ENCODE measurements at regions of chr2 and their contacts with region 1.

Region 1: DNA sequence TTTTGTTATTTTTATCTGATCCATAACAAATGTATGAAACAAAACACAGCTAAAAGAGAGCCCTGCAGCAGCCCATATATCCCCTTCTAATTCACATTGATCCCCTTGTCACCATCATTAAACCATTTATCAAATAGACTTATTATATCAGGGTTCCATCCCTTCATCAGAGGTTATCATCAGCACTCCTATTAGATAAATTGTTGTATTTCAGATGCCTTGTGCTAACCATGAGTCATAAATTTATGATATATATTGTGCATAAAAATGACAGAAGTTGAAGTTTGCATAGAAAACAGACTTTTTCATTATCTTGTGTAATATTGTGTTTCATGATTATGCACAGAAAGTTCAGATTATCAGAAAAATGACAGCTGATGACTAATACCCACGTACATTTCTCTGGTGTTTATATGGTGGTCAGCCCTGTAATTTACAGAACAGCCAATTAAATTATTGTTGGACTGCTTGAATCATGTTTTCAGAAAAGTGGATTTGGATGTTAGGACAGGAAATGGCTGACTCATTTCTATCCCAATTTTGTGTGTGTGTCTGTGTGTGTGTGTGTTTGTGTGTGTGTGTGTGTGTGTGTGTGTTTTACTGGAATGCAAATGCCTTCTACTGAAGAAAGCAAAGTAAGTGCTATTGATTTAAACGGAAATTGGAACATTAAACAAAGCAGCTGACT is 80.9 kb downstream of the PPP1R1C start:
- DNase-seq: no peak
- ATAC-seq: no peak
- H3K4me3 ChIP-seq: no peak overlapping the region
- H3K27ac ChIP-seq: no peak overlapping the region
- H3K4me1 ChIP-seq: peaks cover 5 to 22% of the 10 kb centered on the region in 2 donors
- H3K27me3 ChIP-seq: no peaks in the 10 kb centered on the region
- CTCF ChIP-seq: no peak
- POLR2A ChIP-seq: no peak

Region 2: DNA sequence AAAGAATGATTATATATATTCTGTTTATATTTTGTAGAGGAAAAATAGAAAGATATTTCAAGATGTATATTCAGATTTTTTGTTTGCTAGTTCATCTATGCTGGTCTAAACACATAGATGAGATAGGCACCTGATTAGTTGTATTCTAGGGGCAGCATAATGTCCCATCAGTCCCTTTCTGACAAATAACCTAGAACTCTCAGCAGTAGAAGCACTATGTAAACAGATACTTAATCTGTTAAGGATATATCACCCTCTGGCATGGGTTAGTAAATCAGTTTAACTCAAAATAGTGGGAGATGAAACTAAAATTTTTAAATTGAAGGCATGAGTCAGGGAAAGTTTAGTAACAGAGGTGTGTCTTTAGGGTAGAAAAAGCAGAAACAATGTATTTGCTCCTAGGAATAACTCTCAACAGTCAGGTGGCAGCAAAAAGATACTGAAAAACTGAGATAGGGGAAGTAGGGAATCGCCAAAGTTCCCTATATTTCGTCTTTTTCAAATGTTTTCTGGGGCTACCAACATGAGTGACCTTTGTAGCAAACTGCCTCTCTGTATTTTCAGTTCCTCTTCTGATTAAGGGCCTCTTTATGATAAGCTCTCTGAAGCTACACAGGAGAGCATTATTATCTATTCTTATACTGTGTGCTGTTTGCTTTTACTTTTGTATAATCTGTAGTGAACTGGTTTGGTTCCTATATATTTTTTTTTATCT is 75.2 kb before region 1 on chr2:
- in situ Hi-C with region 1: no loop called
- intact Hi-C with region 1: loop called (anchors 10 kb)
- DNase-seq: no peak
- ATAC-seq: no peak
- H3K4me3 ChIP-seq: no peak overlapping the region
- H3K27ac ChIP-seq: peak overlapping the region in 1 of 4 donors; percentile 23
- H3K4me1 ChIP-seq: peaks cover 15 to 26% of the 10 kb centered on the region in 2 donors
- H3K27me3 ChIP-seq: no peaks in the 10 kb centered on the region
- CTCF ChIP-seq: peak in 1 of 5 experiments; percentile 5
- POLR2A ChIP-seq: no peak

Region 3: DNA sequence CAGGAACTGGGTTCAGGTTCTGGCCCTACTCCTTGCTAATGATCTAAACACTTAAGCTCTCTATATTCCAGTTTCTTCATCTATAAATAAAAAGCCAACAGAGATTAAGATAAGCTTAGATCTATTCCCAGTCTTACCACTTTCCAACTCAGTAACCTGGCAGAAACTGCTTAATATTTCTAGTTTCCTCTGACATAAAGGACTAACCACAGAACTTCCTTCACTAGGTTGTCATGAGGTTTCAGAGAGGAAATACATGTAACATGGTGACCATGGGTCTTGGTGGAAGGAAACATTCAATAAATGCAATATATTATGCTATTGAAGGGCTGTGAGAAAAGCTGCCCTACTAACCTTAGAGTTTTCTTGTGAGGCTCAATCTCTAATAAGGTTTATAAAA is 474.7 kb after region 1 on chr2:
- in situ Hi-C with region 1: no loop called
- intact Hi-C with region 1: no loop called
- DNase-seq: no peak
- ATAC-seq: no peak
- H3K4me3 ChIP-seq: no peak overlapping the region
- H3K27ac ChIP-seq: no peak overlapping the region
- H3K4me1 ChIP-seq: no peaks in the 10 kb centered on the region
- H3K27me3 ChIP-seq: no peaks in the 10 kb centered on the region
- CTCF ChIP-seq: no peak
- POLR2A ChIP-seq: no peak